AG04450 (cell line): ENCODE measurements at regions of chr4 and their contacts with region 1.

Region 1: GRCh38 chr4:121656269-121656641 is 40.5 kb downstream of the ANXA5 start:
- DNase-seq: peak; percentile 37
- H3K4me3 ChIP-seq: no peak overlapping the region
- H3K27ac ChIP-seq: no peak overlapping the region
- H3K27me3 ChIP-seq: no peaks in the 10 kb centered on the region
- CTCF ChIP-seq: peak; percentile 47

Region 2: GRCh38 chr4:121370729-121371325 is 285.4 kb before region 1 on chr4:
- CTCF ChIA-PET with region 1: interaction called, 32 read pairs
- POLR2A ChIA-PET with region 1: no interaction called
- DNase-seq: peak; percentile 1
- H3K4me3 ChIP-seq: no peak overlapping the region
- H3K27ac ChIP-seq: no peak overlapping the region
- H3K27me3 ChIP-seq: no peaks in the 10 kb centered on the region
- CTCF ChIP-seq: peak; percentile 65

Region 3: DNA sequence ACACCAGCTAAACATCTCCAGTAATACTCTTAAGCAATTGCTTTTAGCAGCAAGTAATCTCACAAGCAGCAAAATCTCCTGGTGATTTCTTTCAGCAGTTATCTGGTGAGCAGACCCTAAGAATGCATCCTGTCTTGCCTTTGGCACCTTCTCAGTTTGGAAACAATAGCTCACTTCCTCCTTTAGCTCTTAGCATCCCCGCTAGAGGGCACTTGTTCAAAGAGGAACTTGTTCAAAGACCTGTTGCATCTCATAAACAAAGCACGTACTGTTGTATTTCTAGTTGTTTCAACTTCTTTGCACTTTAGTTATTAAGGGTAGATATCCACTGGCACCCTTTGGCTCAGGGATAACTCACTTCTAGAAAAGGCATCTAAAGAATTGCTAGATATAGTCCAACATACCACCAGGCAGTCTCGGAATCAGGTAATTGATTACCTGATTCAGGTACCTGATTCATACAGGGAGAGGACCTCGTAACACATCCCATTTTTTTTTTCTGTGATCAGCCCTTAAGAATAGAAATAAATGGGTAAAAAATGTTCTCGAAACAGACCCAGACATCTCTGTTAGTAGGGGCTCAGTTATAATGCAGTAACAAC is 193.5 kb before region 1 on chr4:
- CTCF ChIA-PET with region 1: interaction called, 18 read pairs
- POLR2A ChIA-PET with region 1: no interaction called
- DNase-seq: peak; percentile 24
- H3K4me3 ChIP-seq: no peak overlapping the region
- H3K27ac ChIP-seq: no peak overlapping the region
- H3K27me3 ChIP-seq: no peaks in the 10 kb centered on the region
- CTCF ChIP-seq: peak; percentile 80